PC-9 (cell line): ENCODE measurements at regions of chr1 and their contacts with region 1.

Region 1: GRCh38 chr1:154961497-154962262 is at the start of gene PYGO2:
- DNase-seq: peak; percentile 64 to 88
- H3K4me3 ChIP-seq: peak within 1 kb of the TSS; percentile 78
- H3K27ac ChIP-seq: peak within 1 kb of the TSS; percentile 72
- H3K4me1 ChIP-seq: peaks cover 18% of the 10 kb centered on the region
- H3K27me3 ChIP-seq: no peaks in the 10 kb centered on the region
- CTCF ChIP-seq: peak; percentile 60; the same call in 1 of the 2 replicates
- total RNA-seq, gene PYGO2: 30.0 and 33.2 TPM in 2 replicates

Region 2: GRCh38 chr1:154583773-154584172 is 377.9 kb before region 1 on chr1:
- CTCF ChIA-PET with region 1: no interaction called
- POLR2A ChIA-PET with region 1: no interaction called
- intact Hi-C with region 1: no loop called
- DNase-seq: no peak
- H3K4me3 ChIP-seq: no peak overlapping the region
- H3K27ac ChIP-seq: no peak overlapping the region
- H3K4me1 ChIP-seq: no peaks in the 10 kb centered on the region
- H3K27me3 ChIP-seq: no peaks in the 10 kb centered on the region
- CTCF ChIP-seq: no peak

Region 3: GRCh38 chr1:154902938-154903566 is 58.6 kb before region 1 on chr1:
- CTCF ChIA-PET with region 1: no interaction called
- POLR2A ChIA-PET with region 1: no interaction called
- intact Hi-C with region 1: no loop called
- DNase-seq: no peak
- H3K4me3 ChIP-seq: no peak overlapping the region
- H3K27ac ChIP-seq: no peak overlapping the region
- H3K4me1 ChIP-seq: no peaks in the 10 kb centered on the region
- H3K27me3 ChIP-seq: peaks cover 7% of the 10 kb centered on the region; the same call in 1 of the 2 replicates
- CTCF ChIP-seq: no peak

Region 4: GRCh38 chr1:154989195-154989860 is 27.6 kb after region 1 on chr1:
- CTCF ChIA-PET with region 1: no interaction called
- POLR2A ChIA-PET with region 1: no interaction called
- intact Hi-C with region 1: no loop called
- DNase-seq: no peak
- H3K4me3 ChIP-seq: no peak overlapping the region
- H3K27ac ChIP-seq: no peak overlapping the region
- H3K4me1 ChIP-seq: peaks cover 25% of the 10 kb centered on the region
- H3K27me3 ChIP-seq: no peaks in the 10 kb centered on the region
- CTCF ChIP-seq: no peak

Region 5: GRCh38 chr1:155044812-155045690 is 83.4 kb after region 1 on chr1:
- CTCF ChIA-PET with region 1: interaction called, 26 read pairs
- POLR2A ChIA-PET with region 1: interaction called, 3 read pairs
- intact Hi-C with region 1: loop called (anchors 2 kb)
- DNase-seq: peak; percentile 79
- H3K4me3 ChIP-seq: no peak overlapping the region
- H3K27ac ChIP-seq: no peak overlapping the region
- H3K4me1 ChIP-seq: peaks cover 24% of the 10 kb centered on the region
- H3K27me3 ChIP-seq: no peaks in the 10 kb centered on the region
- CTCF ChIP-seq: peak; percentile 73